Ovary (tissue), 10 donors: ENCODE measurements at regions of chr12 and their contacts with region 1.

Region 1: DNA sequence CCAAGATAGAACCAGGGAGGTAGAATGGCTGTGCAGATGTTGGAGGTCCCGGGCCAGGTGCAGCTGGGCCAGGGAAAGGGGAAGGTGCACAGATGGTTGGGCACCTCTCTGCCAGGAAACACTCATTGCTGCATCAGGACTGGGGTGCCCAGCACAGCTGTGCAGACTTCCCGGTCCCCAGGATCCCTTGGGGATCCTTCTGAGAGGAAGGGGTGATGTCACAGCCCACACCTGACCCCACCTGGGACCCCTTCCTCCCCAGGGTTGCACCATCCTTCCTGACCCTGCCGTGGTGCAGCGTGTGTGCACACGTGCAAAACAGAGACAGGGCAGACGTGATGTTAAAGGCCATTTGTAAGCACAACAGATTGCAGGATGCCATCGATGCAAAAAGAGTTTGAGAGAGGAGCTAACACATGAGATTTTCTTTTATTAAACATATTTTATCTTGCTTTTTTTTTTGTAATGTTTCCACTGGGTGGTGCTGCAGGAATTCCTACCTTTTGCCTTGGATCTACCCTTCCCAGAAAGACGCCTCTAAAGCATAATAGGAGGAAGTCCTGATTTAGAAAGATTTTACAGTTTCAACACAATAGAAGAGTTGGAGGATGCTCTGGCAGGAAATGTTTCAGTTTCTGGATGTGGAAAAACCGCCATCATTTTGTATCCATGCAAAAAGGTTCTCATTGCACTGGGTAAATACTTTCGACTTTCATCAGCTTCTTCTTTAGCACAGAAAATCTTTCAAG is 14.8 kb downstream of the ELK3 start:
- DNase-seq: no peak
- H3K4me3 ChIP-seq: no peak overlapping the region
- H3K27ac ChIP-seq: no peak overlapping the region
- H3K4me1 ChIP-seq: peaks cover 1% of the 10 kb centered on the region
- H3K27me3 ChIP-seq: no peaks in the 10 kb centered on the region
- CTCF ChIP-seq: no peak
- EP300 ChIP-seq: no peak
- POLR2A ChIP-seq: no peak

Region 2: GRCh38 chr12:96061864-96062453 is 147.0 kb before region 1 on chr12:
- intact Hi-C with region 1: loop called in 1 of 4 experiments (anchors 5 kb)
- DNase-seq: peak; percentile 41 to 74 (median 67)
- H3K4me3 ChIP-seq: no peak overlapping the region
- H3K27ac ChIP-seq: no peak overlapping the region
- H3K4me1 ChIP-seq: no peaks in the 10 kb centered on the region
- H3K27me3 ChIP-seq: no peaks in the 10 kb centered on the region
- CTCF ChIP-seq: peak; percentile 34 to 70 (median 60)
- EP300 ChIP-seq: no peak
- POLR2A ChIP-seq: no peak